T-cell (primary cell): ENCODE measurements at regions of chr17 and their contacts with region 1.

Region 1: DNA sequence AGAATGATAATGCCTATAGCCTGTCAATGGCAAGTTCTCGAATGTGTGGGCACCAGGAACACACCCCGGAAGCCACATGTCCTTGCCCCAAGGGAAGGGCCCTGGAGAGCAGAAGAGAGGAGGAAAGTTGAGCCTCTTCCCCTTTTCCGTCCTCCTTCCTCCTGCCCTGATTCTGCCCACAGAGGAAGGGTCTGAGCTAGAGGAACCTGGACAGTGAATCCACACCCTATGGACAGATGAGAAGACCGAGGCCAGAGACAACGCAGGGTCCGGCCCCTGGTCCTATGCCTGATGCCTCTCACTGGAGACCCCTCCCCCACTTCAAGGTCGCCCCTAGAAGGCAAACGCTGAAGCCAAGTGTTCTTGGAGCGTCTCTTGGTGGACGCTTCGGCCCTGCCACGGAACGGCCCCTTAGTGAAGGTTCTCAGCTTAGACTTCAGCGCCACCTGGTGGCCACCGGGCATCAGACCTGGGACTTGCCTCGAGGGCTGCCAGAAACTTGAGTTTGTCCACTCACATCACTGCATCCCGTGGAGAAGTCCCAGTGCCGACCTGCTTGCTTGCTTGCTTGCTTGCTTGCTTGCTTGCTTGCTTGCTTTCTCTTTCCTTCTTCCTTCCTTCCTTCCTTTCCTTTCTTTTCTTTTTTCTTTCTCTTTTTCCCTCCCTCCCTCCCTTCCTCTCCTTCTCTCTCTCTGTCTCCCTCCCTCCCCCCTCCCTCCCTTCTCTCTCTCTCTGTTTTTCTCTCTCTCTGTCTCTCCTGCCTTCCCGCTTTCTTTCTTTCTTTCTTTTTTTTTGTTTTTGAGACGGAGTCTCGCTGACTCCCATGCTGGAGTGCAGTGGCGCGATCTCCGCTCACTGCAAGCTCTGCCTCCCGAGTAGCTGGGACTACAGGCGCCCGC is 20.6 kb upstream of the SPNS3 start:
- DNase-seq: peak; percentile 60 to 93 (median 86)
- ATAC-seq: peak; percentile 79 to 99 (median 94)
- H3K4me3 ChIP-seq: peak overlapping the region in 1 of 2 donors; percentile 11
- H3K4me3 Mint-ChIP-seq: peak overlapping the region; percentile 28 to 68 (median 68)
- H3K27ac ChIP-seq: no peak overlapping the region
- H3K27ac Mint-ChIP-seq: peak overlapping the region; percentile 28 to 55
- H3K4me1 ChIP-seq: peaks cover 0 to 8% of the 10 kb centered on the region in 2 experiments
- H3K4me1 Mint-ChIP-seq: peaks cover 4 to 7% (median 5%) of the 10 kb centered on the region in 3 donors
- H3K27me3 ChIP-seq: no peaks in the 10 kb centered on the region
- H3K27me3 Mint-ChIP-seq: no peaks in the 10 kb centered on the region

Region 2: GRCh38 chr17:4199818-4200402 is 213.3 kb before region 1 on chr17:
- CTCF ChIA-PET with region 1: interaction called, 5 to 20 read pairs
- POLR2A ChIA-PET with region 1: no interaction called
- DNase-seq: peak in 17 of 35 experiments; percentile 9 to 71 (median 22)
- ATAC-seq: peak in 3 of 4 experiments; percentile 35 to 57 (median 46)
- H3K4me3 ChIP-seq: no peak overlapping the region
- H3K4me3 Mint-ChIP-seq: no peak overlapping the region
- H3K27ac ChIP-seq: no peak overlapping the region
- H3K27ac Mint-ChIP-seq: no peak overlapping the region
- H3K4me1 ChIP-seq: no peaks in the 10 kb centered on the region
- H3K4me1 Mint-ChIP-seq: peaks cover 0 to 2% (median 0%) of the 10 kb centered on the region in 3 donors
- H3K27me3 ChIP-seq: no peaks in the 10 kb centered on the region
- H3K27me3 Mint-ChIP-seq: no peaks in the 10 kb centered on the region

Region 3: GRCh38 chr17:4480929-4481898 is 68.0 kb after region 1 on chr17:
- CTCF ChIA-PET with region 1: no interaction called
- POLR2A ChIA-PET with region 1: no interaction called
- DNase-seq: peak in 24 of 35 experiments; percentile 2 to 58 (median 26)
- ATAC-seq: peak; percentile 72 to 88 (median 79)
- H3K4me3 ChIP-seq: peak overlapping the region in 1 of 2 donors; percentile 45
- H3K4me3 Mint-ChIP-seq: peak overlapping the region; percentile 63 to 75 (median 64)
- H3K27ac ChIP-seq: peak overlapping the region; percentile 64
- H3K27ac Mint-ChIP-seq: peak overlapping the region; percentile 96
- H3K4me1 ChIP-seq: peaks cover 13 to 64% of the 10 kb centered on the region in 2 experiments
- H3K4me1 Mint-ChIP-seq: peaks cover 50 to 57% (median 51%) of the 10 kb centered on the region in 3 donors
- H3K27me3 ChIP-seq: peaks cover 0 to 2% of the 10 kb centered on the region in 2 experiments
- H3K27me3 Mint-ChIP-seq: no peaks in the 10 kb centered on the region